ENCODE measurements at regions of chr1 and their contacts with region 1.

Region 1: DNA sequence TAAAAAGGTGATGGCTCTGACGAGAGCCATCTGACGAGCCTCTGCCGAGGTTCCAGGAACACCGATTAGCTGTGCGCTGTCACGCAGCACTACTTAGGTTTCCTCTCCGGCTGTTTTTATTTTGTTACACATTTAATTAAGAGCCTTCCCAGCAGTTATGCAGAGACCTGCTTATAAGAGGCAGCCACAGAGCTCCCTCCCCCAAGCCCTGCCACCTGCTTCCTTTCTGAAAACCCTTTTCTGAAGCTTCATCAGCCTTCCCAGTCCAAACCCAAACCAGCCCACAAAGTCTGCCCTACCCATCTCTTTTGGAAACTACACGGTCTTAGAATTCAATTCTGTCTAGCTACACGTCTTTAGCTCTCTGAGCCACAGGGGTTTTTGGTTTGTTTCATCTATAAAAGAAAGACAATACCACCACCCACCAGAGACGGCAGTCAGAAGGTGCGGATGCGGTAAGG is 49.1 kb downstream of the ERI3 start:
- DNase-seq: peak; percentile 37
- H3K4me3 Mint-ChIP-seq: peak overlapping the region; percentile 46
- H3K27ac Mint-ChIP-seq: peak overlapping the region; percentile 89
- H3K4me1 Mint-ChIP-seq: peaks cover 57% of the 10 kb centered on the region
- H3K27me3 Mint-ChIP-seq: no peaks in the 10 kb centered on the region

Region 2: DNA sequence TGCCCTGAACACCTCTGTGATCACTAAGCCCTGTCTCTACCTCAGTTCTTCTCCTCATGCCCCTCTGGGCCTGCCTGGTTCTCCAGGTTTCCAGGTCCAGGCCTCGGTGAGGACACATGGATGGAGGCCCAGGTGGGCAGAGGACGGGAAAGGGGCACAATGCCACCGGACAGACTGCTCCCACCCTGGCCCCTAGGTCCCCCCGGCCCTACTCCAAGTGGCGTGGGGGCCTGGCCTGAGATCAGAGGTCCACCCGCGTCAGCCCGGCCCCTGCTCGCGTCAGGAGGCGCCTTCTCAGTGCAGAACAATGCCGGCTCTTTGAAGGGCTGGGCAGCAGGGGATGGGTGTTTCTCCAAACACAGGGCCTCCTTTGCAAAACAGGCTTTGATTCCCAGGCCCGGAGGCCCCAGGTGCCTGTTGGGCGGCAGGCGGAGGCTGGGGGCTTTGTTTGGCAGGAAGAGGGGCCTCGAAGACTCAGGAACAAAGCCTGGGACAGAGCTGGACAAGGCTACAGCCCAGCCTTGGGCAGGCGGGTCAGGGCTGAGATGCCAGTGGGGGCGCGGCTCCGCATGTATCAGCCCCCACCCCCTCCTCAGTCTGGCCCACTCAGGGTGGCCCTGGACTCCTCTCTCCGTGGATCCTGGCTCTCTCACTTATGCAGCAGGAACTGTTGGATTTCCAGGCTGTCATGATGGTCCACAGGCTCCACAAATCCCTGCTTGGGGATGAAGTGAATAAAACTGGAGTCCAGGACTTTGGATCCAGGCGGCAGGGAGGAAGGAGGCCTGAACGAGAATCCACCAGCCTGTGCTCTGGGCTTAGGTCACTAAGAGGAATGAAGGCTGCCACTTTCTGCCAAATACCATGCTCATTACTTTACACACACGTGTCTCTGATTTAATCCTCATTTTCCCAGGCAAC is 1269.9 kb before region 1 on chr1:
- intact Hi-C with region 1: no loop called
- DNase-seq: no peak
- H3K4me3 Mint-ChIP-seq: no peak overlapping the region
- H3K27ac Mint-ChIP-seq: no peak overlapping the region
- H3K4me1 Mint-ChIP-seq: peaks cover 11% of the 10 kb centered on the region
- H3K27me3 Mint-ChIP-seq: peaks cover 2% of the 10 kb centered on the region

Region 3: GRCh38 chr1:44237721-44238457 is 68.1 kb before region 1 on chr1:
- intact Hi-C with region 1: loop called (anchors 5 kb)
- DNase-seq: peak; percentile 19
- H3K4me3 Mint-ChIP-seq: no peak overlapping the region
- H3K27ac Mint-ChIP-seq: no peak overlapping the region
- H3K4me1 Mint-ChIP-seq: peaks cover 7% of the 10 kb centered on the region
- H3K27me3 Mint-ChIP-seq: no peaks in the 10 kb centered on the region

Region 4: DNA sequence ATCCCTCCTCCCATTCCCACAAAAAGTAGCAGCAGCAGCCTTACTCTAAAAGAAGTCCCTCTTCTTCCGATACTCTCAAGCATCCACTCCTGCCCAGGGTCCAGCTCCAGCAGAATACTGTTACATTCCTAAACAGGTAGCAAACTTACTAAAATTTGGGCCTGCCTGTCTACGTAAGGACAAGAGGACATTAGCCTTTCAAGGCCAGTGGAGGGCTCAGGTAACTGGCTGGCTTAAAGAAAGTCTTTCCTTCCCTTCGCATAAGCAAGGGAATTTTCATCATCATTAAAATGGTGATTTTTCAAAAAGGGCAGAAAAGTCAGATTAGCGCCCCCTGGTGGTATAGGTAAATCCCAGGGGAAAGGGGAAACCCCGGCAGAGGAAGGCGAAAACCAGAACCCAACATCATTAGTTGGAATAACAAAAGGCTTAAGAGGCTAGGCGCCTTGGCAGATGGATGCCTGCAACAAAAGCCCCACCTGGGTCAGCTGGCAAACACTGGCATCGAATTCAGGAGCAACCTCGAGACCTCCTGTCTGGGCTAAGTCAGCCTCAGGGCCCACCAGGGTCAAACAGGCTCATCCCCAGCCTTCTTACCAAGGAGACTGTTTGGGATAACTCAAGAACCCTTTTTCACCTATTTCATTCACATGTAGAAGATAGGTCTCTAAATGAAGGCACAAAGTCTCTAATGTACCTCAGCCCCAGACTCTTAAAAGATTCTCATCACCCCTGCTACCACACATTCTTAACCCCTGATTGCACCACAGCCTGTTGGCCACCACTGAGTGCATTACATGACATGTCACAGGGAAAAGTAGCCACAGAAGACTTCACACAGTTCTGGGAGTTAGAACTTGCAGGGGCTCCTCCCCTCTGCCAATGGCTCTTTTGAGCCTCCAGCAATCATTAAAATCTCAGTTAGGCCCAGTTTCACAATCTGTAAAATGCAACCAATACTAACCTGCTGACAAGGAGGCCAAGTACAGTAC is 12.4 kb after region 1 on chr1:
- intact Hi-C with region 1: loop called (anchors 1 kb)
- DNase-seq: peak; percentile 34
- H3K4me3 Mint-ChIP-seq: no peak overlapping the region
- H3K27ac Mint-ChIP-seq: no peak overlapping the region
- H3K4me1 Mint-ChIP-seq: peaks cover 33% of the 10 kb centered on the region
- H3K27me3 Mint-ChIP-seq: no peaks in the 10 kb centered on the region

Region 5: GRCh38 chr1:44332505-44332904 is 26.5 kb after region 1 on chr1:
- intact Hi-C with region 1: no loop called
- DNase-seq: no peak
- H3K4me3 Mint-ChIP-seq: no peak overlapping the region
- H3K27ac Mint-ChIP-seq: no peak overlapping the region
- H3K4me1 Mint-ChIP-seq: peaks cover 3% of the 10 kb centered on the region
- H3K27me3 Mint-ChIP-seq: no peaks in the 10 kb centered on the region

Region 6: GRCh38 chr1:44354840-44355581 is 49.0 kb after region 1 on chr1 and contains the start of gene ERI3:
- intact Hi-C with region 1: loop called (anchors 1 kb)
- DNase-seq: peak; percentile 95
- H3K4me3 Mint-ChIP-seq: peak within 1 kb of the TSS; percentile 93
- H3K27ac Mint-ChIP-seq: peak within 1 kb of the TSS; percentile 88
- H3K4me1 Mint-ChIP-seq: peaks cover 34% of the 10 kb centered on the region
- H3K27me3 Mint-ChIP-seq: no peaks in the 10 kb centered on the region
- total RNA-seq, gene ERI3: 51.4 and 55.4 TPM in 2 replicates

Measured in activated T-helper 1 cell treated with anti-CD3 and anti-CD28 coated beads, Interleukin-12 subunit alpha, Interleukin-12 subunit beta, Interleukin-2, Interleukin-4 antibody, amounts not matched to agents 30 ng/mL and 10 ng/mL and 1 ng/mL, durations not matched to agents 14 hours and 24 hours and 36 hours (primary cell).